K562 (cell line): ENCODE measurements at regions of chr4 and their contacts with region 1.

Region 1: GRCh38 chr4:38782452-38783108 is at the start of gene TLR10:
- DNase-seq: peak; percentile 39 to 60 (median 42)
- ATAC-seq: peak; percentile 84
- H3K4me3 ChIP-seq: no peak within 1 kb of the TSS
- H3K27ac ChIP-seq: no peak within 1 kb of the TSS
- H3K4me1 ChIP-seq: no peaks in the 10 kb centered on the region
- H3K27me3 ChIP-seq: peaks cover 0 to 9% of the 10 kb centered on the region in 2 experiments; a peak in 3 of 5 replicates
- CTCF ChIP-seq: peak; percentile 52 to 72 (median 59)
- EP300 ChIP-seq: no peak
- POLR2A ChIP-seq: no peak
- RAD21 ChIP-seq: peak; percentile 60 to 71
- polyA plus RNA-seq, gene TLR10: not detected

Region 2: DNA sequence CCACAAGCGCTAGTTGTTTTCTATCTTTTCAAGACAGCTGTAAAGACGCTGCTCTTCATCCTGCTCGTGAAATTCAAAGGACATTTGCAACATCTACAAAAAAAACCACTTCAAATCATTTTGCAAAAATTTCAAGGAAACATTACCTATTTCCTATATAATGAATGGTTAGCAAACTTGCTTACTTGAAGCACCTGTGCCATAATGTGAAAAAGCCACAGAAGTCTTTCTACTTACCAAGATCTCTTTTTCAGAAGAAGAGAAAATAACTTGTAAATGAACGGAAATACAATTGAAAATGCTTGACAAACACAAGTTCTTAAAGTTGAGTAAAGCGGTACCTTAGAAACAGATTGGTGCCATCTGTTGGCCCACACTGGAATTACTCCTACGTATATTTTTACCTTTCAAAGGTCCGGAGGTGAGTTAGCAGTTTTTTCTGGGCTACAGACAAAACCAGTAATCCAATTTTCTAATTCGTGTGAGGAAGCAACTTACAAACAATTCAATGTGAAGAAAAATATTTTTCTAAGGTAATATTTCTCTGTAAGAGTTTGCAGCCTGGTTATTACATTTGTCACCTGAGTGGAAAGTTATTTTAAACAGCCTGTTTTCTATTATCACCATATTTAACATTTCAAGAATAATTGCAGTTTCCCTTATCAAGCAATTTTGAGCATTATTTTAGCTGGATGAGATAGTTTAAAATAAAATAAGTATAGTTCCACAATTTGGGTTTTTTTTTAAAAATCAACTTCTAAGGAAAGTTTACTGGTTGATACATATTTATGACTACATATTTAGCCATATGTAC is 74.2 kb after region 1 on chr4 and contains the start of gene TLR6:
- CTCF ChIA-PET with region 1: interaction called, 3 read pairs
- POLR2A ChIA-PET with region 1: no interaction called
- in situ Hi-C with region 1: no loop called
- intact Hi-C with region 1: loop called (anchors 5 kb)
- DNase-seq: peak; percentile 51 to 89 (median 60)
- ATAC-seq: peak; percentile 78
- H3K4me3 ChIP-seq: peak within 1 kb of the TSS; percentile 20; the same call in 1 of the 2 replicates
- H3K27ac ChIP-seq: peak within 1 kb of the TSS; percentile 54
- H3K4me1 ChIP-seq: peaks cover 0 to 20% of the 10 kb centered on the region in 2 experiments; a peak in 3 of 5 replicates
- H3K27me3 ChIP-seq: no peaks in the 10 kb centered on the region; a peak in 1 of 5 replicates
- CTCF ChIP-seq: peak; percentile 66 to 87 (median 73)
- EP300 ChIP-seq: 0 out of 2 replicates have a peak, but pooled peaks have one; percentile 34
- POLR2A ChIP-seq: no peak
- RAD21 ChIP-seq: peak; percentile 70 to 76
- polyA plus RNA-seq, gene TLR6: 0.08 to 0.45 TPM